Activated naive CD4-positive, alpha-beta T cell treated with anti-CD3 and anti-CD28 coated beads for 36 hours (primary cell): ENCODE measurements at regions of chr3 and their contacts with region 1.

Region 1: GRCh38 chr3:108090701-108091451 is at the start of gene CD47:
- DNase-seq: peak; percentile 94
- H3K4me3 Mint-ChIP-seq: peak within 1 kb of the TSS; percentile 97
- H3K27ac Mint-ChIP-seq: peak within 1 kb of the TSS; percentile 98
- H3K4me1 Mint-ChIP-seq: peaks cover 25% of the 10 kb centered on the region
- H3K27me3 Mint-ChIP-seq: no peaks in the 10 kb centered on the region
- total RNA-seq, gene CD47: 60.2 to 63.7 TPM

Region 2: DNA sequence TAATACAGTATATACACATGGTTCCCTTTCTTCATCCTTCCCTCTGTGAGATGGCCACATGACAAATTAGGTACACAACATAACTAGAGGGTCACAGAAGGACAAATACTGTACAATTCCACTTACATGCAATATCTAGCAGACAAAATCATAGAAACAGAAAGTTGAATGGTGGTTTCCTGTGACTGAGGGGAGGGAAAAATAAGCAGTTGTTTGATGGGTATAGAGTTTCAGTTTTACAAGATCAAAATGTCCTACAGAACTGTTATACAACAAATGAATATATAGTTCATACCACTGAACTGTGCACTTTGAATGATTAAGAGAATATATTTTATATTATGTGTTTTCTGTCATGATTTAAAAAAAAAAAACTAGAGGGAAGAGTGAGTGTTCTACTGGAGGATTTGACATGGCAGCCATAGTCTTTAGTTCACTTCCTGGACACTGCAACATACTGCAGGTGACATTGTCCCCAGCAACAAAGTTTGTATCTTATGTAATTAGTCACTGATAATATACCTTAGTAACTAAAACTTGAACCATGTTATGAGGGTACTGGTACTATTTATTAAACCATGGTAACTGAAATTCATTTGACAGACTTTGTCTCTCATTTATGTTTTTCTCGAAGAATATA is 676.4 kb before region 1 on chr3:
- CTCF ChIA-PET with region 1: no interaction called
- intact Hi-C with region 1: loop called (anchors 1 kb)
- DNase-seq: peak; percentile 14
- H3K4me3 Mint-ChIP-seq: no peak overlapping the region
- H3K27ac Mint-ChIP-seq: no peak overlapping the region
- H3K4me1 Mint-ChIP-seq: peaks cover 10% of the 10 kb centered on the region
- H3K27me3 Mint-ChIP-seq: no peaks in the 10 kb centered on the region

Region 3: GRCh38 chr3:107938143-107938542 is 152.7 kb before region 1 on chr3:
- CTCF ChIA-PET with region 1: no interaction called
- intact Hi-C with region 1: loop called (anchors 1 kb)
- DNase-seq: peak; percentile 21
- H3K4me3 Mint-ChIP-seq: no peak overlapping the region
- H3K27ac Mint-ChIP-seq: no peak overlapping the region
- H3K4me1 Mint-ChIP-seq: peaks cover 20% of the 10 kb centered on the region
- H3K27me3 Mint-ChIP-seq: no peaks in the 10 kb centered on the region

Region 4: DNA sequence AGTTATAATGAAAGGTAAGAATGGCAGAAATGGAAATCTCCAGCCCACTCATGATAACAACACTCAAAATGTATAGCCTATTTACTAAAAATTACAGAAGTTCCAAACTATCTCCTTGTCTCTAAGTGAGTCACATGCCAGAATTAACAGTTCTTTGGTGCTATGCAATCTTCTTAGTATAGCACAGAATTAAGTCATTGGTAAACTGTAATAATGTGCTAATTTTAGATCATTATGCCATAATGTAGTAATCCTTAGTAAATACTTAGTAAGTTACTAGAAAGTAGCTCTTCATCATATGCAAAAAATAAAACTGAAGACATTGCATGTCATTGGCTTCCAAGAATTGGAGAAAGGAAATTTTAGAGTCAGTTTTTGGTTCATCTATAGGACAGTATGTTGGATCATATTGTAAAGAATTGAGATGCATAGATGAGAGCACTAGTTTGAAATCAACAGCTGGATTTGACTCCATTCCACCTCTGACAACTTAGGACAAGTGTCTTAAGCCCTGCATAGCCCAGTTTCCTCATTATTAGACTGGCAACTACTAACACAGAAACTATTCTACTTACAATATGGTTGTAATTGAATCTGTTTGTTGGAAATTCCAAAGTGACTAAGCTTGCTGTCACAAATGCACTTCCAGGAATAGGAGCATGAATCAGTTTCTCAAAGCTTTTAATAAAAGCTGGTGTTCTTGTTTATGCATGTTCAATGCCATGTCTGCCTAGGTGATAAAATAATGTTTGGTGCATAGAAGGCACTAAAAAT is 40.0 kb after region 1 on chr3:
- CTCF ChIA-PET with region 1: interaction called, 7 read pairs
- intact Hi-C with region 1: loop called (anchors 1 kb)
- DNase-seq: no peak
- H3K4me3 Mint-ChIP-seq: peak overlapping the region; percentile 16
- H3K27ac Mint-ChIP-seq: peak overlapping the region; percentile 76
- H3K4me1 Mint-ChIP-seq: peaks cover 85% of the 10 kb centered on the region
- H3K27me3 Mint-ChIP-seq: no peaks in the 10 kb centered on the region

Region 5: DNA sequence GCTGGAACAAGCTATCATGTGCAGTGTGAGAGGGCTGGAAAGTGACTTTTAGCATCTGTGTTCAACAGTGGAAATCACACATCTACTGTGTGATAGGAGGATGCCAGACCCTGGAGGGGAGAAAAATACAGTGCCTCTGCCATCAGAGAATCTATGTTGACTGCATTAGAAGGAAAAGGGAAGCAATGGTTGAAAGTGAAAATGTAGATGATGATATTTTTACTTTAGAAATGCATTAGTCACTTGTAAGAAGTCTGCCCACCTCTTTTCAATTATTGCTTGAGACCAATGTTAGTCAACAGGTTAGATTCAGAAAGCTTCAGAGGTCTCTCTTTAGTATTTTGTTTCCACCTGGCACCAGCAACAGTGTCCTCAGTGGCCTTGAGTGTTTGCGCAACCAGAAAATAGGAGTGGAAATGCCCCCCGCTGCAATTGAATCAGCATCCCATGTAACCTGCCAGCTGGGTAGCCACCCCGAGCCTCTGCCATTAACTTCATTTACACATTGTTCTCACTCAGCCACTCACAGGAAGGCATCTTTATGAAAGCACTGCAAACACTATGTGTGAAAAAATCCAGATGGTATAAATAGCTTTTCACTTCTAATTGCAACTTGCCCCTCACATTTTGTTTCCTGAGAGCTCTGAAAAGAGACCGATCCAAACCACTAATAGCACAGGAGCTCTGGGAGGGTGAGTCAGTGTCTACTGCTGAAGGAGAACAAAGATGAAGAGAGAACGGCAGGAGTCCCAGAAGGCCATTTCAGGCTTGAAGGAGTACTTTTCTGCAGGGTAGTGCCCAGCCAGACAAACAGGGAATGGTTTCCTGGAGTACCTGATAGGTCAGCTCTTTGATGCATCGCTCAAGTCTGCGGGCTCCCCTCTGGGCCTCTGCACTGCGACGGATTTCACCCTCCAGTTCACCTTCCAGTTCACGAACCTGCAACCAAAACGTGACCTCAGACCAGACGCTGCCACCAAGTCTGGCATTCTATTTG is 297.6 kb after region 1 on chr3:
- CTCF ChIA-PET with region 1: interaction called, 3 read pairs
- intact Hi-C with region 1: loop called (anchors 1 kb)
- DNase-seq: peak; percentile 17
- H3K4me3 Mint-ChIP-seq: no peak overlapping the region
- H3K27ac Mint-ChIP-seq: no peak overlapping the region
- H3K4me1 Mint-ChIP-seq: peaks cover 19% of the 10 kb centered on the region
- H3K27me3 Mint-ChIP-seq: peaks cover 14% of the 10 kb centered on the region

Region 6: DNA sequence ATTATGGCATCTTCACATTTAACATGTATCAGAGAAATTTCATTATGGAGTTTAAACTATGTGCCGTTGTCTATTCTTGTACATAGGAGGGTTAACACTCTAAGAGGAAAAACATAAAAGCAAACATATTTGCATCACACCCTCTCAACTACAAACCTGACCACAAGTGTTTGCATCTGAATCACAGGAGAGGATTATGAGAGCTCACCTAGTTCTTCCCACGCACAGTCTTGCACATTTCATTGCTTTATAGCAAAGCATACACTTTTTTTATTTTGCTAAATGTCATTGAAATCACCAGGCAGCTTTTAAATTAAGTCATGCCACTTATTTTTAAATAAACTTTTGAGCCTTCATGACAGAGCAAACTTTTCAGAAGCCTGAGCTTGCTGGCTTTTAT is 744.2 kb after region 1 on chr3:
- CTCF ChIA-PET with region 1: no interaction called
- intact Hi-C with region 1: loop called (anchors 2 kb)
- DNase-seq: peak; percentile 66
- H3K4me3 Mint-ChIP-seq: peak overlapping the region; percentile 81
- H3K27ac Mint-ChIP-seq: peak overlapping the region; percentile 93
- H3K4me1 Mint-ChIP-seq: peaks cover 77% of the 10 kb centered on the region
- H3K27me3 Mint-ChIP-seq: no peaks in the 10 kb centered on the region